Ascending aorta (tissue), 2 donors: ENCODE measurements at regions of chr7 and their contacts with region 1.

Region 1: DNA sequence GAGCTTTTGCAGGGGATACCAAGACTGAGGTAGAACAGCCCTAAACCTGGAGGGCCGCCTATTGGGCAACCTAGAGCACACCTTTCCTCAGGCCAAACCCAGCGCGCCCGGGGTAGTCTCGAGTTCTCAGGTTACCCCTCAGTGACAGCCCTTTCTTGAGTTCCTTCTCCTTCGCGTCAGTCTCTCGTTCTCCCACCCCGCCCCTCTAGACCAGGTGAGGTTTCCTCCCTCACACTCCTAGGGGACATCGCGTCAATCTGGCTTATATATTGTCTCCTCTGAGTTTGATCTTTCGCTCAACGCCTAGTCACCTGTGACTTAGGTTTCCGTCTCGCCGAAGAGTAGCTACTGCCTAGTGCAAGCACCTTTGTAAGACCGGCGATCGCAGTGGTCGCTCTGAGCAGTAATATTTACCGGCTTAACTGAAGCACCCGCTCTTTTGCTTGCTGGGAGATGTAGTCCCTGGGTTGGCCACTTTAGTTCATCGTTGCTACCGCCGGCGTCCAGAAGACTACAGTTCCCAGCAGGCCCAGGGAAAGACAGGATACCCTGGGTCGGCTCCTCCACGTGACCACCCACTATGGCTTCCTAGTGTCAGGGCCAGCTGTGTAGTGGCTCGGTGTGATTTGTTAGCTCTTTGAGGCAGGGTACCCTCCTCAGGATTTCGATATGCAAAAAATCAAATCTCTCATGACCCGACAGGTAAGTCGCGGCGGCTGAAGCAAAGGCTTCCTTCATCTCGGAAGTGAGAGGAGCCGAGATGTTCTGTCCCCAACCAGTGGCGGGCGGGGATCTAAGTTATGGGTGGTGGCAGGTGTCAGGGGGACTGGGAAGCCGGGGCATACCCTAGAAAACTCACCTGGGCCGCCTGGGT is at the start of gene VPS50:
- DNase-seq: peak; percentile 86 to 98
- H3K4me3 ChIP-seq: peak within 1 kb of the TSS; percentile 90 to 91
- H3K27ac ChIP-seq: peak within 1 kb of the TSS in 1 of 2 donors; percentile 29
- H3K4me1 ChIP-seq: peaks cover 0 to 6% of the 10 kb centered on the region in 2 donors
- H3K27me3 ChIP-seq: no peaks in the 10 kb centered on the region
- CTCF ChIP-seq: no peak
- total RNA-seq, gene VPS50: 6.9 TPM

Region 2: DNA sequence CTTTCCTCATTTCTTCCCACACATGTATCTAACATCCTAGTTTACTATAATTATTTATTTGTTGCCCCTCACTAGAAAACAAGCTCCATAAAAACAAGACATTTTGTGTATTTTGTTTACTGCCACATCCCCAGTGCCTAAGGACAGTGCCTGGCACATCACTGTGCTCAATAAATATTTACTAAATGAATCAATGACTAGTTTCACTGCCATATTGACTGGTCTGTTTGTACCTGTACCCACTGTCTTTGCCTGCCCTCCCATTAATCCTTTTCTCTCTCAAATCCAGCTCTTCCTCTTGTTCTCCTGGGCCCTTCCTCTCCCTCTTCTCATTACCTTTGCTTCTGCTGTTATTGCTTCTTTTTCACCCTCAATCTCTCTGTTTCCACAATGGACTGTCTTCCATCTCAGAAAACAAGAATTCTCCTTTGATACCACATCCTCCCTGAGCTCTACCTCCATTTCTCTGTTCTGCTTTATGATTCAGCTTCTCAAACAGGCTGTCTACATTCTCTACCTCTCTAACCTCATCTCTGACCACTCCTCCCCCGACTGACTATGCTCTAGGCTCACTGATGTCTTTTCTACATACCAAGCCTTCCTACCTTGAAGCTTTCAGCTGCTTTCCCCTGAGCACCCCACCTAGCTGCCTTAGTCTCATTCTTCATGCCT is 633.6 kb before region 1 on chr7:
- intact Hi-C with region 1: loop called (anchors 10 kb)
- DNase-seq: no peak
- H3K4me3 ChIP-seq: no peak overlapping the region
- H3K27ac ChIP-seq: no peak overlapping the region
- H3K4me1 ChIP-seq: no peaks in the 10 kb centered on the region
- H3K27me3 ChIP-seq: no peaks in the 10 kb centered on the region
- CTCF ChIP-seq: no peak

Region 3: GRCh38 chr7:93011351-93012294 is 220.4 kb before region 1 on chr7:
- intact Hi-C with region 1: no loop called
- DNase-seq: no peak
- H3K4me3 ChIP-seq: no peak overlapping the region
- H3K27ac ChIP-seq: no peak overlapping the region
- H3K4me1 ChIP-seq: no peaks in the 10 kb centered on the region
- H3K27me3 ChIP-seq: no peaks in the 10 kb centered on the region
- CTCF ChIP-seq: no peak

Region 4: GRCh38 chr7:93117852-93118530 is 114.0 kb before region 1 on chr7 and contains the start of gene SAMD9:
- intact Hi-C with region 1: loop called (anchors 2 kb)
- DNase-seq: peak in 1 of 2 donors; percentile 71
- H3K4me3 ChIP-seq: peak within 1 kb of the TSS; percentile 55 to 67
- H3K27ac ChIP-seq: peak within 1 kb of the TSS; percentile 56 to 69
- H3K4me1 ChIP-seq: peaks cover 0 to 11% of the 10 kb centered on the region in 2 donors
- H3K27me3 ChIP-seq: no peaks in the 10 kb centered on the region
- CTCF ChIP-seq: no peak
- total RNA-seq, gene SAMD9: 5.6 TPM

Region 5: GRCh38 chr7:93327006-93327633 is 95.1 kb after region 1 on chr7:
- intact Hi-C with region 1: no loop called
- DNase-seq: no peak
- H3K4me3 ChIP-seq: no peak overlapping the region
- H3K27ac ChIP-seq: no peak overlapping the region
- H3K4me1 ChIP-seq: no peaks in the 10 kb centered on the region
- H3K27me3 ChIP-seq: no peaks in the 10 kb centered on the region
- CTCF ChIP-seq: no peak